BJ (cell line): ENCODE measurements at regions of chr18 and their contacts with region 1.

Region 1: GRCh38 chr18:8389391-8390340 is 219.6 kb upstream of the RAB12 start:
- DNase-seq: peak; percentile 6
- H3K4me3 ChIP-seq: no peak overlapping the region
- H3K27me3 ChIP-seq: no peaks in the 10 kb centered on the region
- CTCF ChIP-seq: peak; percentile 91

Region 2: DNA sequence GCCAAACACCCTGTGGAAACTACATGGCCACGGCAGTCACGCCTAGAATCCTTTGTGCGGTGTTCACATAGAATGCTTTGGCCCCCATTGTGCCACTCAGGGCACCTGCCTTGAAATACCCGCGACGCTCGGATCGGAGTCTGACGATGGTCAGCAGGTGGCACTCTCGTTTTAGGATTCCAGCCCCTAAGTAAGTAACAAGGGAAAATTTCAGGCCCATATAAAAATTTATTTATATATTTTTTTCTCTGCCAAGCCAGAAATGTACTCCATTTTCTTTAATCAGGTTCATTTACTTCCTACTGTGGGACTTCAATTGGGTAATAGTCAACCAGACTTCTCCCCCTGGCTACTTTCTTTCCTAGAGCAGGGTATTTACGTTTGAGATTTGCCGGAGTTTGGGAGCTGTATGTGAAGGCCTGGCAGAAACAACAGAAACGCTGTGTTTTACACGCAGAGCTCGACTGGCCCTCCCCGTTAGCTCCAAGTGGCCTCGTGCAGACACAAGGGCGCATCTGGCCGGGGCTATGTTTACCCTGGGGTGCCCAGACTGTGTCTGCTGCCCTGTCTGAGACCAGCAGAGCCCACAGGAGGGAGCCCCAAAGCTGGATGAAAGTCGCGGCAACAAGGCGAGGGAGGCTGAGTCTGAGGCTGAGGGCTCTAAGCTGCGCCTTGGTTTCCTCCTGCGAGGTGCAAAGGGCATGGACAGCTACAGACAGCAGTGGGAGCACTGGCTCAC is 1117.2 kb before region 1 on chr18:
- CTCF ChIA-PET with region 1: interaction called, 11 read pairs
- POLR2A ChIA-PET with region 1: no interaction called
- DNase-seq: no peak
- H3K4me3 ChIP-seq: no peak overlapping the region
- H3K27me3 ChIP-seq: no peaks in the 10 kb centered on the region; the same call in 1 of the 2 replicates
- CTCF ChIP-seq: peak; percentile 53

Region 3: DNA sequence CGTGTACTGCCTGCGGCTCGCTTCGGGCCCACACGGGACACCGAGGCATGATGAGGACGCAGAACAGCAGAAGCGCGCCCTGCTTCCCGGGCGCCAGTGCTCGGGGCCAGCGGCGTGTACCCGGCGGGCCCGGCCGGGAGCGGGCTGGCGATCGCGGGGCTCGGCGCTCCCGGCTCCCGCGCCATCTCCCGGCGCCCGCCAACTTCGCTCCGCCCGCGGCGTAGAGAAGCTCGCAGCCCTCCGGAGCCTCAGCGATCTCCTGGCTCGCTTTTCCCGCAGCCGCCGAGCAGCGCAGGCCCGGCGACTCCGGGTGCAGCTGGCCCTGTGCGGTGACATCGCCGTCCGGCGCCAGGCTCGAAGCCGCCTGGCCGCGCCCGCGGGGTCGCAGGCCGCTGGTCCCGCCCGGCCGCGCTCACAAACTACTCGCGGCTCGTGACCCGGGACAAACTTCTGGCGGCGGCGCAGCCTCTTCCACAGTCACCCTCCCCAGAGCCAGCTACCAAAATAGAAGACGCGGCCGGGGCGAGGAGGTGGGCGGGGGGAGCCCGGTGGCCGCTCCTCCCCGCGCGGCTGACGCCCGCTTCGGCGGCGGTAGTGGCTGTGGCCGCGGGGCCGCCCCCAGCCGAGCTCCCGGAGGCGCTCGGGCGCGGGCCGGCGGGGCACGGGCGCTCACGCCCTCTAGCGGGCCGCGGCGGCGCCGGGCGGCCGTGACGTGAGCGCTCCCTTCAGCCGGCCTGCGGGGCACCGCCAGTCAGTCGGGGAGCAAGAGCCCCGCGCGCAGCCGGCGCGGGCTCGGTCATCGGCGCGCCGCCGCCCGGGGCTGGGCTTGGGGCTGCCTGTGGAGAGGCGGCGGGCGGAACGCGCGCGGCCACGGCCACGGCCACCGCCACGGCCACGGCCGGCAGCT is 822.8 kb before region 1 on chr18 and contains the start of gene PTPRM:
- CTCF ChIA-PET with region 1: interaction called, 10 read pairs
- POLR2A ChIA-PET with region 1: no interaction called
- DNase-seq: no peak
- H3K4me3 ChIP-seq: peak within 1 kb of the TSS; percentile 91
- H3K27me3 ChIP-seq: no peaks in the 10 kb centered on the region
- CTCF ChIP-seq: no peak
- polyA plus RNA-seq, gene PTPRM: 149 TPM in 2 replicates

Region 4: DNA sequence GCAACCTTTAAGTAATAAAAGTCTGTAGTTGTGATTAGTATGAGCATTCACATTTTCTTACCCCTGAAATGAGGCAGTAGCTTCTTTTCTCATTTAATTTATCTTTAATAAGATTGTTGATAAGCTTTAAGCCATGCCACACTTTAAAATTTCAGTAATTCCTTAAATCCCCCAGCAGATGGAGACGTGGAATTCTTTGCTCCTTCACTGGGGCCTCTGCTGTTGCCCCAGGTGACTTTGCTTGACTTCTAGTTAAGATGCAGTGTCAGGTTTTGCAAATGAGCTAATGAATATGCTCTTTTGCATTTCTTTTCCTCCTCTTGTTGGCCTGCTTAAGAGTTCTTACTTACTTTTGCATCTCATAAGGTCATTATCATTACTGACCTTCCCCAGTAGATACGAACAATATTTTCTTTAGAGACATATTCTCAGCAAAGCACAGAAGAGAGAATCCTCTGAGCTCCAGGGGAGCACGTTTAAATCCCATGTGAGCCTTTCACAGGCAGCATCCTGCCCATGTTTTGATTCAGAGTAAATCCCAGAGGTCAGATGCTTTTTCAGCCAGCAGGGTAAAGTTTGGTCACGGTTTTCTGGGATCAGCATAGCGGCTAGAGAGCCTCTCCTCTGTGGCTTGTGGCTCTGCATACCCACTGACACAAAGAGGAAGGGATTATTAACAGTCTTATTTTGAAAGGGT is 599.7 kb before region 1 on chr18:
- CTCF ChIA-PET with region 1: interaction called, 15 read pairs
- POLR2A ChIA-PET with region 1: no interaction called
- DNase-seq: no peak
- H3K4me3 ChIP-seq: no peak overlapping the region
- H3K27me3 ChIP-seq: no peaks in the 10 kb centered on the region
- CTCF ChIP-seq: peak; percentile 57

Region 5: DNA sequence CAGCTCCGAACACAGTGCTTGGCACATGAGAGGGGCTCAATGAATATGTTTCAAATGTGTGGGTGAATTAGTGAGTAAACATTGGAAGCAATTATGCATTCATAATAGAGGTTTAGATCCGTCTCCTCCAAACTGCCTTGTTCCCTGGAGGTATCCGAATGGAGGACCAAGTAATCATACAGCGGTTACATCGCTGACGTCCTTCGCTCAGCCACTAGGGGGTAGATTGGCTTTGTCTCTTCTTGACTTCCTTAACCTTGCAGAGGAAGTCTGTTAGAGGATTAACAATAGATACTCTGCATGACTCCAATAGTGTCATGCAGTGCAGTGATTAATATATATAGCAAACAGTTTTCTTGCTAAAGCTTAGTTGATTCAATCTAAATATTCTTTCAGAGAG is 305.5 kb before region 1 on chr18:
- CTCF ChIA-PET with region 1: interaction called, 16 read pairs
- POLR2A ChIA-PET with region 1: no interaction called
- DNase-seq: no peak
- H3K4me3 ChIP-seq: no peak overlapping the region
- H3K27me3 ChIP-seq: no peaks in the 10 kb centered on the region
- CTCF ChIP-seq: peak; percentile 63

Region 6: GRCh38 chr18:8400296-8400695 is 10.6 kb after region 1 on chr18:
- CTCF ChIA-PET with region 1: interaction called, 11 read pairs
- POLR2A ChIA-PET with region 1: no interaction called
- DNase-seq: no peak
- H3K4me3 ChIP-seq: no peak overlapping the region
- H3K27me3 ChIP-seq: no peaks in the 10 kb centered on the region
- CTCF ChIP-seq: no peak

Region 7: GRCh38 chr18:8525692-8526091 is 136.0 kb after region 1 on chr18:
- CTCF ChIA-PET with region 1: no interaction called
- POLR2A ChIA-PET with region 1: no interaction called
- DNase-seq: no peak
- H3K4me3 ChIP-seq: no peak overlapping the region
- H3K27me3 ChIP-seq: peaks cover 8% of the 10 kb centered on the region
- CTCF ChIP-seq: peak; percentile 17; the same call in 1 of the 2 replicates